MCF 10A (cell line): ENCODE measurements at regions of chr1 and their contacts with region 1.

Region 1: GRCh38 chr1:109099938-109100773 is 9.6 kb downstream of the TMEM167B start:
- DNase-seq: peak; percentile 97
- H3K4me3 Mint-ChIP-seq: peak overlapping the region; percentile 97
- H3K27ac Mint-ChIP-seq: peak overlapping the region; percentile 96
- H3K4me1 Mint-ChIP-seq: peaks cover 7% of the 10 kb centered on the region
- H3K27me3 Mint-ChIP-seq: no peaks in the 10 kb centered on the region
- CTCF ChIP-seq: peak; percentile 56

Region 2: GRCh38 chr1:109027841-109028240 is 72.3 kb before region 1 on chr1:
- CTCF ChIA-PET with region 1: interaction called, 7 read pairs
- POLR2A ChIA-PET with region 1: interaction called, 10 read pairs
- intact Hi-C with region 1: no loop called
- DNase-seq: no peak
- H3K4me3 Mint-ChIP-seq: no peak overlapping the region
- H3K27ac Mint-ChIP-seq: no peak overlapping the region
- H3K4me1 Mint-ChIP-seq: no peaks in the 10 kb centered on the region
- H3K27me3 Mint-ChIP-seq: no peaks in the 10 kb centered on the region
- CTCF ChIP-seq: peak; percentile 7

Region 3: DNA sequence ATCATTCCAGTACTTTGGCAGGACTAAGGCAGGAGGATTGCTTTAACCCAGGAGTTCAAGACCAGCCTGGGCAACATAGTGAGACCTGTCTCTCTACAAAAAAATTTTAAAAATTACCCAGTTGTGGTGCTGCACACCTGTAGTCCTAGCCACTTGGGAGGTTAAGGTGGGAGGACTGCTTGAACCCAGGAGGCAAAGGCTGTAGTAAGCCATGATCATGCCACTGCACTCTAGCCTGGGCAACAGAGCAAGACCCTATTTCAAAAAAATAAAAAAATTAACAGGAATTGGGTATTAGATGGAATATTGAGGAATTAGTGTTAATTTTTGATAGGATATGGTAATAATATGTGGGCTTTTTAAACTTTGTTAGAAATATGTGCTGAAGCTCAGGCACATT is 41.1 kb before region 1 on chr1:
- CTCF ChIA-PET with region 1: interaction called, 11 read pairs
- POLR2A ChIA-PET with region 1: interaction called, 4 read pairs
- intact Hi-C with region 1: no loop called
- DNase-seq: no peak
- H3K4me3 Mint-ChIP-seq: no peak overlapping the region
- H3K27ac Mint-ChIP-seq: no peak overlapping the region
- H3K4me1 Mint-ChIP-seq: peaks cover 7% of the 10 kb centered on the region
- H3K27me3 Mint-ChIP-seq: no peaks in the 10 kb centered on the region
- CTCF ChIP-seq: no peak

Region 4: GRCh38 chr1:109133815-109134214 is 33.7 kb after region 1 on chr1:
- CTCF ChIA-PET with region 1: no interaction called
- POLR2A ChIA-PET with region 1: no interaction called
- intact Hi-C with region 1: no loop called
- DNase-seq: peak; percentile 33
- H3K4me3 Mint-ChIP-seq: no peak overlapping the region
- H3K27ac Mint-ChIP-seq: no peak overlapping the region
- H3K4me1 Mint-ChIP-seq: peaks cover 6% of the 10 kb centered on the region
- H3K27me3 Mint-ChIP-seq: no peaks in the 10 kb centered on the region
- CTCF ChIP-seq: no peak

Region 5: DNA sequence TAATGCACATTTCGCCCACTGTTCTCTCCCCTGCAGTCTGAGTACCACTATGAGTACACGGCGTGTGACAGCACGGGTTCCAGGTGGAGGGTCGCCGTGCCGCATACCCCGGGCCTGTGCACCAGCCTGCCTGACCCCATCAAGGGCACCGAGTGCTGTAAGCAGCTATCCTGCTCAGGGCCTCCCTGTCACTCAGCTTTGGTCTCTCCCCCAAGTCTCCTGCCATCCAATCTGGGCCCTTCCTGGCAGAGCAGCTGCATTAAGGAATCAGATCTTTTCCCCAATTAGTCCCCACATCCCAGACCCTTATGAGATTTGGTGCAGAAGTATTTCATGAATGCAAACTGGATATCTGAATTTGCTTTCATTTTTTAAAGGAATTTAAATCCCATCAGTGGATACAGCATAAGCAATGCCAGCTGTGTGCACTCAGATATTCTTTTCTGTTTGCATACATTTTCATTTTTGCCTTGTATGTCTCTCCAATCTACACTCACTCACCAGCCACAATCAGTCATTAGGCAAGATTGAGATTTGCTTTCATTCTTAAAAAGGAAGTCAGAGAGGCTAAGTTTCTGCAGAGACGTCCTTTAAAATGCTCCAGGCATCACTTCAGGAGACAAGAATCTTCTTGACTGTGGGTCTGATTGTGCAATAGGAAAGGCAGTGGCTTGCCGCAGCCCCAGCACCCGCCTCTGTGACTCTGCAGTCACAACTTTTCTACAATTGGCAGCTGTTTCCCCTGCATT is 61.9 kb after region 1 on chr1:
- CTCF ChIA-PET with region 1: interaction called, 3 read pairs
- POLR2A ChIA-PET with region 1: interaction called, 18 read pairs
- intact Hi-C with region 1: no loop called
- DNase-seq: peak; percentile 79
- H3K4me3 Mint-ChIP-seq: peak overlapping the region; percentile 21
- H3K27ac Mint-ChIP-seq: peak overlapping the region; percentile 72
- H3K4me1 Mint-ChIP-seq: peaks cover 9% of the 10 kb centered on the region
- H3K27me3 Mint-ChIP-seq: no peaks in the 10 kb centered on the region
- CTCF ChIP-seq: no peak

Region 6: GRCh38 chr1:110254996-110255787 is 1155.0 kb after region 1 on chr1:
- CTCF ChIA-PET with region 1: no interaction called
- POLR2A ChIA-PET with region 1: no interaction called
- intact Hi-C with region 1: no loop called
- DNase-seq: no peak
- H3K4me3 Mint-ChIP-seq: no peak overlapping the region
- H3K27ac Mint-ChIP-seq: no peak overlapping the region
- H3K4me1 Mint-ChIP-seq: peaks cover 10% of the 10 kb centered on the region
- H3K27me3 Mint-ChIP-seq: no peaks in the 10 kb centered on the region
- CTCF ChIP-seq: no peak